Lower leg skin (tissue), 4 donors: ENCODE measurements at regions of chr11 and their contacts with region 1.

Region 1: DNA sequence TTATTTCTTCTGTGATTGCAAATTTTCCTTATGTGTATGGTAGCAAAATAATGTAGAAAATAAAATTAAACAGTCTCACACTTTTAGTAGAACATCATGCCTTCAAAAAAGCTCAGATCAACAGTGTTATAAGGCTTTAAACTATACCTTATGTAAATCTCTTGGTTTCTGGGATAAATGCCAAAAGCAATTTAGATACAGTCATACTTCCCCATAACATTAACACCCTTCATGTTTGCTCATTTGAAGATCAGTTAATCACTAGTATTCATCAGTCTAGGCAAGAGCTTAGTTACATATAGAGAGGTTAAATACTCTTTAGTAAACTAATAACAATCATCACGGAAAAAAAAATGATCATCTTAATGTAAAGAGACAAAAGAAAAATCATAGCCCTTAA is 421.8 kb upstream of the ANO3 start:
- DNase-seq: no peak
- H3K4me3 ChIP-seq: no peak overlapping the region
- CTCF ChIP-seq: no peak
- POLR2A ChIP-seq: no peak

Region 2: DNA sequence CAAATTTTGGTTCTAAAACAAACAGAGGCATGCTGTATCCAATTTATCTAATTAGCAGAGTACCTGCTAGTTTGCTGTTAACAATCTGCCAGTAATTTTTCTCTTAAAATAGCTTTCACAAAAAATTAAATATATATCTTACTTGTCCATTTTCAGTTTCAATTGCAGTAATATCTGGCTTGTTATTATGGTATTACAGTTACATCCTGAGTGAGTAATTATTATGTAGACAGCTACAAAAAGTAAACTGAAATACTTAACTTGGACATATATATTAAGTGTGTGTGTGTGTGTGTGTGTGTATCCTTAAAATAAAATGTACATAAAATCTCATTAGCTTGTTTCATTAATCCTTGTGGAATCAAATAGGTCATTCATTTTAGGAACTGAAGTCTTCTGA is 1264.5 kb before region 1 on chr11:
- intact Hi-C with region 1: loop called (anchors 5 kb)
- DNase-seq: no peak
- H3K4me3 ChIP-seq: no peak overlapping the region
- CTCF ChIP-seq: no peak
- POLR2A ChIP-seq: no peak

Region 3: GRCh38 chr11:27571156-27571825 is 1661.2 kb after region 1 on chr11:
- intact Hi-C with region 1: loop called (anchors 5 kb)
- DNase-seq: no peak
- H3K4me3 ChIP-seq: no peak overlapping the region
- CTCF ChIP-seq: no peak
- POLR2A ChIP-seq: no peak